Activated CD4-positive, alpha-beta T cell treated with anti-CD3 and anti-CD28 coated beads for 36 hours (primary cell): ENCODE measurements at regions of chr1 and their contacts with region 1.

Region 1: GRCh38 chr1:160607011-160607671 is 27.8 kb upstream of the CD84 start:
- DNase-seq: peak; percentile 72
- ATAC-seq: peak; percentile 94
- H3K4me3 Mint-ChIP-seq: no peak overlapping the region
- H3K27ac Mint-ChIP-seq: peak overlapping the region; percentile 85
- H3K4me1 Mint-ChIP-seq: peaks cover 54% of the 10 kb centered on the region
- H3K27me3 Mint-ChIP-seq: no peaks in the 10 kb centered on the region

Region 2: DNA sequence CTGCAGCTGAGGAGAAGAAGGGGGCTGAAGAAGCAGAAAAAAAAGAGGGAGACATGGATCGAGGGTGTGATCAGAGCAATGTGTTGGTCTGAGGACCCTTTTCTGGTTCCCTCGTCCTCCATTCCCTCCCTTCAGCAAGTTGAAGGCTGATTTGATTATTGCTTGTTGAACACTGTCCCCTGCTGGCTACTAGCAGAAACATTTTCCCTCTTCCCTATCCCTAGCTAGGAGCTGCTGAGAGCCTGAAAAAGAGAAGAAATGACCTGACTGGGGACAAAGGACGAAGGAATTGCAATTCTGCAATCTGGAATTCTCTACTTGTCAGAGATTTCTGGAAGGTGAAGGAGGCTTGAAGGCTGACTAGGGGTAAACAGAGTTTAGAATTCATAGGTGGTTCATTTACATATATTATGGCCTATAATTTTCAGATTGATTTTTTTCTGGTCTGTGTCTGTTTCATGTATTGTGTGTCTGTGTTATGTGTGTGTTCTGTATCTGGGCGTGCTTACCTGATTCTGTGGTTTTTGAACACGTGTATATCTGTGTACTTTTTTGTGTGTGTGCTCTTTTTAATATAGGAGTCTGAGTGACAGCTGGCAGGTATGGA is 230.5 kb before region 1 on chr1:
- CTCF ChIA-PET with region 1: interaction called, 14 read pairs
- POLR2A ChIA-PET with region 1: no interaction called
- intact Hi-C with region 1: no loop called
- DNase-seq: peak; percentile 48
- ATAC-seq: peak; percentile 89
- H3K4me3 Mint-ChIP-seq: no peak overlapping the region
- H3K27ac Mint-ChIP-seq: no peak overlapping the region
- H3K4me1 Mint-ChIP-seq: peaks cover 13% of the 10 kb centered on the region
- H3K27me3 Mint-ChIP-seq: no peaks in the 10 kb centered on the region

Region 3: GRCh38 chr1:160494620-160495019 is 112.5 kb before region 1 on chr1:
- CTCF ChIA-PET with region 1: no interaction called
- POLR2A ChIA-PET with region 1: no interaction called
- intact Hi-C with region 1: loop called in 1 of 2 experiments (anchors 5 kb)
- DNase-seq: no peak
- ATAC-seq: no peak
- H3K4me3 Mint-ChIP-seq: no peak overlapping the region
- H3K27ac Mint-ChIP-seq: no peak overlapping the region
- H3K4me1 Mint-ChIP-seq: peaks cover 45% of the 10 kb centered on the region
- H3K27me3 Mint-ChIP-seq: no peaks in the 10 kb centered on the region

Region 4: GRCh38 chr1:160539990-160540858 is 66.9 kb before region 1 on chr1:
- CTCF ChIA-PET with region 1: interaction called, 150 read pairs
- POLR2A ChIA-PET with region 1: interaction called, 7 read pairs
- intact Hi-C with region 1: loop called (anchors 1 kb)
- DNase-seq: peak; percentile 62
- ATAC-seq: peak; percentile 88
- H3K4me3 Mint-ChIP-seq: peak overlapping the region; percentile 47
- H3K27ac Mint-ChIP-seq: peak overlapping the region; percentile 92
- H3K4me1 Mint-ChIP-seq: peaks cover 63% of the 10 kb centered on the region
- H3K27me3 Mint-ChIP-seq: no peaks in the 10 kb centered on the region

Region 5: DNA sequence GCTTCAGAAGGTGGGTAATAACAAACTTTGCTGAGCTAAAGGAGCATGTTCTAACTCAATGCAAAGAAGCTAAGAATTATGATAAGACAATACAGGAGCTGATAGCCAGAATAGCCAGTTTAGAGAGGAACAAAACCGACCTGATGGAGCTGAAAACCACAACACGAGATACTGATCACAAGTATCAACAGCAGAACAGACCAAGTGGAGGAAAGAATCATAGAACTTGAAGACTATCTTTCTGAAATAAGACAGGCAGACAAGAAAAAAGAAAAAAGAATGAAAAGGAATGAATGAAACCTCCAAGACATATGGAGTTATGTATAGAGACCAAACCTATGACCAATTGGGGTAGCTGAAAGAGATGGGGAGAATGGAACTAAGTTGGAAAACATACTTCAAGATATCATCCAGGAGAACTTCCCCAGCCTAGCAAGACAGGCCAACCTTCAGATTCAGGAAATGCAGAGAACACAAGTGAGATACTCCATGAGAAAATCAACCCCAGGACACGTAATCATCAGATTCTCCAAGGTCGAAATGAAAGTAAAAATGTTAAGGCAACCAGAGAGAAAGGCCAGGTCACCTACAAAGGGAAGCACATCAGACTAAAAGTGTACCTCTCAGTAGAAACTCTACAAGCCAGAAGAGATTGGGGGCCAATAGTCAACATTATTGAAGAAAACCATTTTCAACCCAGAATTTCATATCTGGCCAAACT is 48.3 kb before region 1 on chr1:
- CTCF ChIA-PET with region 1: interaction called, 150 read pairs
- POLR2A ChIA-PET with region 1: no interaction called
- intact Hi-C with region 1: no loop called
- DNase-seq: no peak
- ATAC-seq: no peak
- H3K4me3 Mint-ChIP-seq: peak overlapping the region; percentile 57
- H3K27ac Mint-ChIP-seq: peak overlapping the region; percentile 94
- H3K4me1 Mint-ChIP-seq: peaks cover 58% of the 10 kb centered on the region
- H3K27me3 Mint-ChIP-seq: no peaks in the 10 kb centered on the region

Region 6: DNA sequence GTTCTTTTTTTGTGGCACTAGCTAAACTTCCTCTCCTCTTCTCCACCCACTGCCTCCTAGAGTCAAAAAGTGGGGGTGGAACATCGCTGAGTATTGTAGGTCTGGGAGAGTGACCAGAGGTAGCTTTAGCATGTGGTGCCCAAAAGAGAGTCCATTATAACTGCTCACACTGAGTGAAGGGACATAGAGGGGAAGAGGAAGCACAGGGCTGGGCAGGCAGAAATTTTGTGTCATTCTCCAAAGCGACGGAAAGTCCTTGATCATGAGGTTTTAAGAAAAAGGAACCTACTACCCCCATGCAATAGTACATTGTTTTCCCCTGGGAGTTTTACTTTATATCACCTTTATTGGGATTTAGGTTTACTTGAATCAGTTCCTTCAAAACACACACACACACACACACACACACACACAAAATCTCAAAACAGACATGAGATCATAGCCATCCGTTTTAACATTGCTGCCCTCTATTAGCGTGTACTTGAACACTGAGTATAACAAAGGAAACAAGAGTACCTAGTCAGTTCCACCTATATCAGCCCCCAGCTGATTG is 32.0 kb before region 1 on chr1:
- CTCF ChIA-PET with region 1: interaction called, 45 read pairs
- POLR2A ChIA-PET with region 1: no interaction called
- intact Hi-C with region 1: loop called in 1 of 2 experiments (anchors 2 kb)
- DNase-seq: peak; percentile 28
- ATAC-seq: peak; percentile 50
- H3K4me3 Mint-ChIP-seq: peak overlapping the region; percentile 77
- H3K27ac Mint-ChIP-seq: peak overlapping the region; percentile 96
- H3K4me1 Mint-ChIP-seq: peaks cover 89% of the 10 kb centered on the region
- H3K27me3 Mint-ChIP-seq: no peaks in the 10 kb centered on the region

Region 7: GRCh38 chr1:160855181-160855981 is 248.2 kb after region 1 on chr1:
- CTCF ChIA-PET with region 1: no interaction called
- POLR2A ChIA-PET with region 1: no interaction called
- intact Hi-C with region 1: no loop called
- DNase-seq: no peak
- ATAC-seq: no peak
- H3K4me3 Mint-ChIP-seq: no peak overlapping the region
- H3K27ac Mint-ChIP-seq: no peak overlapping the region
- H3K4me1 Mint-ChIP-seq: no peaks in the 10 kb centered on the region
- H3K27me3 Mint-ChIP-seq: no peaks in the 10 kb centered on the region